CD8-positive, alpha-beta memory T cell (primary cell): ENCODE measurements at regions of chr12 and their contacts with region 1.

Region 1: GRCh38 chr12:15532364-15532977 is 210.2 kb downstream of the PTPRO start:
- DNase-seq: peak in 2 of 5 donors; percentile 30 to 65
- H3K4me3 ChIP-seq: no peak overlapping the region
- H3K4me3 Mint-ChIP-seq: no peak overlapping the region
- H3K27ac ChIP-seq: no peak overlapping the region
- H3K27ac Mint-ChIP-seq: no peak overlapping the region
- H3K4me1 ChIP-seq: peaks cover 24% of the 10 kb centered on the region
- H3K4me1 Mint-ChIP-seq: peaks cover 6 to 14% (median 7%) of the 10 kb centered on the region in 3 donors
- H3K27me3 ChIP-seq: no peaks in the 10 kb centered on the region
- H3K27me3 Mint-ChIP-seq: peaks cover 2 to 4% of the 10 kb centered on the region in 2 donors

Region 2: DNA sequence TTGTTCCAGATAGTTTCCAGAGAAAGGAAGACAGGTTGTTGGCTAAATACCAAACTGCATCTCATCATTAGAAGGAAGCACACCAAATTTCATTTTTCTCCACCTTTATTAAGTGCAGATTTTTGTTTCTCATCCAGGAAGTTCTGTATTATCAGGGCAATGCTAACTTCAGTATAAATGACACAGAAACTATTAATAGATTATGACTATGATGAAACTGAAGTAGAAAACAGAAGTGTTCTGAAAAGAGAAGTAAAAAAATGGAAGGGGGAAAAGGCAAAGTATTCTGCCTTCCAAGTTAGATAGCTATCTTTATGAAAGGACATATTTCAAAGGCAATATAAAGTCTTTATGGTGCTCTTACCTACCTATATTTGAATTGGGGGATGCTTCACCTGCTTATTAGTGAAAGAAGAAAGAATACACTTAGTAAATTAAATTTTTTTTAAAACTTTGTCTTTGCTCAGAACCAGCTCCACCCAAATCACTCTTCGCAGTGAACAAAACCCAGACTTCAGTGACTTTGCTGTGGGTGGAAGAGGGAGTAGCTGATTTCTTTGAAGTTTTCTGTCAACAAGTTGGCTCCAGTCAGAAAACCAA is 13.7 kb after region 1 on chr12:
- CTCF ChIA-PET with region 1: interaction called, 26 read pairs
- POLR2A ChIA-PET with region 1: interaction called, 3 read pairs
- DNase-seq: peak in 3 of 5 donors; percentile 28 to 83 (median 44)
- H3K4me3 ChIP-seq: no peak overlapping the region
- H3K4me3 Mint-ChIP-seq: peak overlapping the region in 3 of 7 donors; percentile 1 to 47 (median 35)
- H3K27ac ChIP-seq: no peak overlapping the region
- H3K27ac Mint-ChIP-seq: peak overlapping the region in 5 of 8 donors; percentile 38 to 87 (median 78)
- H3K4me1 ChIP-seq: peaks cover 51% of the 10 kb centered on the region
- H3K4me1 Mint-ChIP-seq: peaks cover 15 to 35% (median 34%) of the 10 kb centered on the region in 3 donors
- H3K27me3 ChIP-seq: no peaks in the 10 kb centered on the region
- H3K27me3 Mint-ChIP-seq: peaks cover 0 to 3% of the 10 kb centered on the region in 2 donors

Region 3: DNA sequence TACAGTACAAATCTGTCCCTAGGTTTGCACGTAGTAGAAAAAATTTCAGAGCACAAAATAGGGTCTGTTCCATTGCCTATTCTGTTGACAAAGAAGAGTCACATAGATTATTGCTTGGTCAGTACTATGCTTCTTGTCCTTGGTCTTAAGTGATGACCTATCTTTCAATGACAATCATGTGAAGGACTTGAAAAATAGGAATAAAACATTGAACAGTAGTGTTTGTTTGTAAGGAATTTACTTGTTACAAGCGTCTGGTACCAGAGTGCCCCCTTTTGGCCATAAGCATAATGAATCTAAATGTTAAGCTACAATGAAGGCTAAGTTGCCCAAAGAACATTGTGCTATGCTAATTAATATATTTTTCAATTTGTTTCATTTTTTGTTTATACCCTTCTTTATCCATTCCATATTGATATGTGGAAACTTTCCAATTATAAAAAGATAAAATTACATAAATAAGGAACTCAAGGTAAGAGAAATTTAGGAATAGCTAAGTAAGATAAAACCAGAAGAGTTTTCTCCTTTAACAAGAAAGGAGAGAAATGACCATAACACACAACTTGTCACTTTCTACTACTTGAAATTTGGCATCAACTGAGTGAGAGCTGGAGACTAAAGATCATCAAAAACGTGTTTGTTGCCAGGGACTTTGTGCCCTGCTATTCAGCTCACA is 52.0 kb after region 1 on chr12:
- CTCF ChIA-PET with region 1: interaction called, 45 read pairs
- POLR2A ChIA-PET with region 1: interaction called, 3 read pairs
- DNase-seq: peak in 1 of 5 donors; percentile 51
- H3K4me3 ChIP-seq: no peak overlapping the region
- H3K4me3 Mint-ChIP-seq: no peak overlapping the region
- H3K27ac ChIP-seq: no peak overlapping the region
- H3K27ac Mint-ChIP-seq: no peak overlapping the region
- H3K4me1 ChIP-seq: peaks cover 5% of the 10 kb centered on the region
- H3K4me1 Mint-ChIP-seq: no peaks in the 10 kb centered on the region
- H3K27me3 ChIP-seq: no peaks in the 10 kb centered on the region
- H3K27me3 Mint-ChIP-seq: peaks cover 10 to 31% of the 10 kb centered on the region in 2 donors

Region 4: GRCh38 chr12:15650399-15651128 is 118.1 kb after region 1 on chr12:
- CTCF ChIA-PET with region 1: no interaction called
- POLR2A ChIA-PET with region 1: no interaction called
- DNase-seq: no peak
- H3K4me3 ChIP-seq: no peak overlapping the region
- H3K4me3 Mint-ChIP-seq: no peak overlapping the region
- H3K27ac ChIP-seq: no peak overlapping the region
- H3K27ac Mint-ChIP-seq: peak overlapping the region in 1 of 8 donors; percentile 1
- H3K4me1 ChIP-seq: no peaks in the 10 kb centered on the region
- H3K4me1 Mint-ChIP-seq: no peaks in the 10 kb centered on the region
- H3K27me3 ChIP-seq: no peaks in the 10 kb centered on the region
- H3K27me3 Mint-ChIP-seq: peaks cover 0 to 2% of the 10 kb centered on the region in 2 donors